ENCODE measurements at regions of chr21 and their contacts with region 1.

Region 1: GRCh38 chr21:16330082-16330907 is 600.5 kb downstream of the USP25 start:
- DNase-seq: peak; percentile 87
- ATAC-seq: peak; percentile 100
- H3K4me3 ChIP-seq: no peak overlapping the region
- H3K27ac ChIP-seq: no peak overlapping the region
- H3K4me1 ChIP-seq: no peaks in the 10 kb centered on the region
- H3K27me3 ChIP-seq: peaks cover 2% of the 10 kb centered on the region
- CTCF ChIP-seq: peak; percentile 87

Region 2: GRCh38 chr21:15894596-15894995 is 435.7 kb before region 1 on chr21:
- CTCF ChIA-PET with region 1: no interaction called
- POLR2A ChIA-PET with region 1: no interaction called
- intact Hi-C with region 1: loop called (anchors 1 kb)
- DNase-seq: peak; percentile 41
- ATAC-seq: peak; percentile 43
- H3K4me3 ChIP-seq: no peak overlapping the region
- H3K27ac ChIP-seq: no peak overlapping the region
- H3K4me1 ChIP-seq: no peaks in the 10 kb centered on the region
- H3K27me3 ChIP-seq: no peaks in the 10 kb centered on the region
- CTCF ChIP-seq: peak; percentile 70

Region 3: DNA sequence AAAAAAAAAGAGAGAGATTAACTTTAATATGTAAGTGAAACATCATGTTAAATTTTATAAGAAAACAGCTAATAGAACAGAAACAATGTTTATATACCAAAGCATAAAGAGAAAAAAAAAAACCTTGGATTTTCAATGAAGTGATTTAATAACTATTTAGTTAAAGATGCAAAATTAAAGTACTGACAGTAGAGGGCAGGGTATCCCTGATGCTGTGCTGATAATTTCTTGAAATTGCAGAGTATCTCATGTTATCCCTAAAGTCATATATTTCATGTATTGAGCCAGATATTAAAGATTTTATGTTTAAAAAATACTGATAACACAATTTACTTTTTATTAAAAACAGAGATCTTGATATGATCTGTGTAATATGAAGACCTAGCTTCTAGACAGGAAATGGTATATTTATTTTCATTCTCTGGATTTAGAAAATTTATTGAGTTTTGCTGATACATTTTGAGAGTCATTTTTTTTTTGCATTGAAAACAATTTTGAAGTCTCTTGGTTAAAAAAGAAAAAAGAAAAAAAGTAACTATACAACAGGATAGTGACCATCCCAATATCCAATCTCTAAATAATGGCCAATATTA is 327.3 kb before region 1 on chr21:
- CTCF ChIA-PET with region 1: no interaction called
- POLR2A ChIA-PET with region 1: no interaction called
- intact Hi-C with region 1: loop called (anchors 1 kb)
- DNase-seq: peak; percentile 58
- ATAC-seq: peak; percentile 62
- H3K4me3 ChIP-seq: no peak overlapping the region
- H3K27ac ChIP-seq: no peak overlapping the region
- H3K4me1 ChIP-seq: no peaks in the 10 kb centered on the region
- H3K27me3 ChIP-seq: no peaks in the 10 kb centered on the region
- CTCF ChIP-seq: peak; percentile 78

Region 4: DNA sequence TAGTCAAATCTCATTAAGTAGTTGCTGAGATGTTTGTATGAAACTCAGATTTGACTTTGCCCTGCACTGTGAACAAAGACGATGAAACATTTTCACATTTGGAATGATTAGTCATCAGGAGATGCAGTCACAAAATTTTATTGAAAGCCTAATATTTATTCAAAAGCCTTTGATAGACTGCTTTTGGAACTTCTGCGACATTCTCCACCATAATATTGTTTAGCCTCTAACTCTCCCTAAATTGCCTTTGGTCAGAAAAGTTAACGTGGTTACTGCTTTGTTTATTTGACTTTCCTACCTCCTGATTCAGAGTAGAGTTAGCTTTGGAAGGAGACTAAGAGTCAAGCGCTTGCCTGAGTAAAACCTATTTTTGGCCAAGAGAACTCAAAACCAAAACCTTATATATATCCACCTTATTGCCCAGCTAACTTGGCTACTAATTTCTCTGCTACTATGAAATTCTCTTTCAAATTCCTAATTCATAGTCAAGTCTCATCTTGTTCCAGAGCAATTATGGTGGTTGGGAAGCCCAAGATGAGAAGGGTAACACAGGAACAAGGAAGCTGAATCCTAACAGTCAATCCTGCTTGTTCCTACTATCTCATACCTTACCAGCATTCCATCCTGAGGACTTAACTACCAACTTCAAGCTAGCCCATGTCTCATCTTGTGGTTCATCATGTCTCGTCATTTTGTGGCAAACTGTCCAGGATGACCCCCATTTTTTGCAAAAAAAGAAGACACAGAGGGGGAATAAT is 170.9 kb before region 1 on chr21:
- CTCF ChIA-PET with region 1: no interaction called
- POLR2A ChIA-PET with region 1: no interaction called
- intact Hi-C with region 1: loop called (anchors 1 kb)
- DNase-seq: peak; percentile 71
- ATAC-seq: peak; percentile 94
- H3K4me3 ChIP-seq: peak overlapping the region; percentile 24; the same call in 1 of the 2 replicates
- H3K27ac ChIP-seq: peak overlapping the region; percentile 81
- H3K4me1 ChIP-seq: peaks cover 19% of the 10 kb centered on the region
- H3K27me3 ChIP-seq: no peaks in the 10 kb centered on the region
- CTCF ChIP-seq: no peak

Region 5: GRCh38 chr21:16194095-16194787 is 136.1 kb before region 1 on chr21:
- CTCF ChIA-PET with region 1: no interaction called
- POLR2A ChIA-PET with region 1: no interaction called
- intact Hi-C with region 1: loop called (anchors 2 kb)
- DNase-seq: peak; percentile 35
- ATAC-seq: peak; percentile 75
- H3K4me3 ChIP-seq: peak overlapping the region; percentile 48
- H3K27ac ChIP-seq: peak overlapping the region; percentile 2; the same call in 1 of the 2 replicates
- H3K4me1 ChIP-seq: no peaks in the 10 kb centered on the region
- H3K27me3 ChIP-seq: peaks cover 48% of the 10 kb centered on the region
- CTCF ChIP-seq: no peak; the same call in 1 of the 2 replicates

Measured in PC-3 (cell line).